ENCODE measurements at regions of chr18 and their contacts with region 1.

Region 1: DNA sequence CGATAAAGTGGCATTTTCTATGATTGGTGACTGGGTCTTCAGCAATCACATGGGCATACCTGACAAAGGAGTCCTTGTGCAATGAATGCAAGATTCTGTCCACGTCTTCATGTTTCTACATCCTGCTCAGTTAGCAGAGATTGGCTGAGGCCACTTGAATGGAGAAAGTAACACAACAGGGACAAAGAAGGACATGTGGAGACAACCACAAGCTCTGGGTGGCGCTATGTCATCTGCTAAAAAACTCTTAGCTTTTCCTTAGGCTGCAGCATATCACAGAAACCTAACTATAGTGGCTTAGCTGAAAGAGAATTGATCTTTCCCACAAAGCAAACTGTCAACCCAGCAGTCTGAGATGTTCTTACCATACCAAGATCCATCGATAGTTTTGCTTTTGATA is 1109.7 kb downstream of the SOCS6 start:
- DNase-seq: peak; percentile 15
- H3K4me3 Mint-ChIP-seq: no peak overlapping the region
- H3K27ac Mint-ChIP-seq: no peak overlapping the region
- H3K4me1 Mint-ChIP-seq: no peaks in the 10 kb centered on the region
- H3K27me3 Mint-ChIP-seq: no peaks in the 10 kb centered on the region

Region 2: DNA sequence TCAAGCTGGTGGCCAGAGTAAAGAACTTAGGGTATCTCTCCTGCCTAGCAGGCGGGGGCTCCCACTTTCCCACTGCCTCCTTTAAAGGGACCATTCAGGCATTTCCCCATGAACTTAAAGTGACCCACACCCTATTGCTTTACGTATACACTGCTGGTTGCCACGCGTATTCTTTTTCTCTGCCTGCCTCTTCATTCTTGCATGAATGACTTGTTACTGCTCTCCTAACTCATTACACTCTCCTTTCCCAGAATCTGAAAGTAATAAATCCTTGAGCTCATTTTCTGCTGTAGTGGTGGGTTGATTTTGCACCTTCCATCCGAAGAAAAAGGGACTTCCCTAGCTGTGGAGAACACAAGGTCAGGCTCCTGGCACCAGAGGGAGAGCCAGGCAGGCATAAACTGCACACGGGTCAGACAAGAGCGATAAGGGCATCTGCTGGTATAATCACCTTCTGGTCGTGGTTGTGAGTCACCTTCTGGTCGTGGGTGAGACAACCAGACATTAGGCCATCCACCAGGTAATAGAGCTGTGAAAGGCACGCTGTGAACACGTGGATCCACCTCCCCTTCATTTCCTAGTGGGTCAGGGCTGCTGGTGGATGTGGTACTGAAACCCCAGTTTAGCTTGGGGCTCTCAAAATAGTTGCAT is 159.4 kb before region 1 on chr18:
- CTCF ChIA-PET with region 1: no interaction called
- intact Hi-C with region 1: no loop called
- DNase-seq: no peak
- H3K4me3 Mint-ChIP-seq: no peak overlapping the region
- H3K27ac Mint-ChIP-seq: no peak overlapping the region
- H3K4me1 Mint-ChIP-seq: peaks cover 2% of the 10 kb centered on the region
- H3K27me3 Mint-ChIP-seq: no peaks in the 10 kb centered on the region

Region 3: DNA sequence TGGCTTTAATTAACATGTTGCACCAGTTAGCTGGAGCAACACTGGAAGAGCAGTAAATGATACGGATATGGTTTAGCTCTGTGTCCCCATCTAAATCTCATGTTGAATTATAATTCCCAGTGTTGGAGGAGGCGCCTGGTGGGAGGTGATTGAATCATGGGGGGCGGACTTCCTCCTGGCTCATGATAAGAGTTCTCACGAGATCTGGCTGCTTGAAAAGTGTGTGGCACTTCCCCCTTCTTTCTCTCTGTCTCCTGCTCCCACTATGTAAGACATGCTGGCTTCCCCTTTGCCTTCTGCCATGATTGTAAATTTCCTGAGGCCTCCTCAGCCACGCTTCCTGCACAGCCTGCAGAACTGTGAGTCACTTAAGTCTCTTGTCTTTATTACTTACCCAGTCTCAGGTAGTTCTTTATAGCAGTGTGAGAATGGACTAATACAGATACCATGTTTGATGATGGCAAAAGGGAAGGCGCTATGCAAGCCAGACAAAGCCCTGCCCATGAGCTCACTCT is 146.1 kb before region 1 on chr18:
- CTCF ChIA-PET with region 1: no interaction called
- intact Hi-C with region 1: no loop called
- DNase-seq: no peak
- H3K4me3 Mint-ChIP-seq: no peak overlapping the region
- H3K27ac Mint-ChIP-seq: no peak overlapping the region
- H3K4me1 Mint-ChIP-seq: no peaks in the 10 kb centered on the region
- H3K27me3 Mint-ChIP-seq: no peaks in the 10 kb centered on the region

Region 4: DNA sequence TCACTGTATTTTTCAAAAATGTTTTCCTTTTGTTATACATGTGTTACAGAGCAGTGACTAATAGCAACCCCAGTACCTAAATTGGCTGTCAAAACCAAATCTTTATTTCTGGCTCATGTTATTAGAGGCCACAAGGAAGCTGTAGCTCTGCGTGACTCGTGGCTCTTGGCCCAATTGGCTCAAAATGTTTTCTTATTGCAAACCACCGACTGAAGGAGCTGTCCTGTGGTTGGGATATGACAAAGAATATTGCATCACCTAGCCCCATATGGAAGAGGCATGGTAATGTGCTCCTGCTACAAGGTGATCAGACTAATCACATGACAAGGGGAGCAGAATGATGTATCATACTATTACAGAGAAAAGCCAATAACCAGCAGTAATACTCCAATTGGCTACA is 87.1 kb after region 1 on chr18:
- CTCF ChIA-PET with region 1: no interaction called
- intact Hi-C with region 1: no loop called
- DNase-seq: no peak
- H3K4me3 Mint-ChIP-seq: no peak overlapping the region
- H3K27ac Mint-ChIP-seq: no peak overlapping the region
- H3K4me1 Mint-ChIP-seq: no peaks in the 10 kb centered on the region
- H3K27me3 Mint-ChIP-seq: no peaks in the 10 kb centered on the region

Region 5: DNA sequence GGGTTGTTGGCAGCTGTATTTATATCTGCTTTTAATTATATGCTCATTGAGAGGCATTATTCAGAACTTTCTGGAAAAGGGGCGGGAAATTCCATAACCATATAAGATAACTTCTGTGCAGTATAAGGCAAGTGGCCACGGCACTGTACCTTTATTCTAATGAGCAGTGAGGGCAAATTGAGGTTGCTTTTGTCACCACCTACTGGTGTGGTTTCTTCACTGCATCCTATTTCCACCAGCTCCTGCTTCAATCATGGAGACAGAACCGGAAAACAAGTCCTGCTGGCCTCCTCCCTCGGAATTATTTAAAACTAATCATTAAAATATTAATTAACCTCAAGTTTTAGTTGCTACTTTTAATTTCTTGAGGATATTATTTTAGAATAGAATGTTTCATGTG is 386.2 kb after region 1 on chr18:
- CTCF ChIA-PET with region 1: no interaction called
- intact Hi-C with region 1: loop called (anchors 10 kb)
- DNase-seq: peak; percentile 26
- H3K4me3 Mint-ChIP-seq: no peak overlapping the region
- H3K27ac Mint-ChIP-seq: no peak overlapping the region
- H3K4me1 Mint-ChIP-seq: no peaks in the 10 kb centered on the region
- H3K27me3 Mint-ChIP-seq: no peaks in the 10 kb centered on the region

Region 6: DNA sequence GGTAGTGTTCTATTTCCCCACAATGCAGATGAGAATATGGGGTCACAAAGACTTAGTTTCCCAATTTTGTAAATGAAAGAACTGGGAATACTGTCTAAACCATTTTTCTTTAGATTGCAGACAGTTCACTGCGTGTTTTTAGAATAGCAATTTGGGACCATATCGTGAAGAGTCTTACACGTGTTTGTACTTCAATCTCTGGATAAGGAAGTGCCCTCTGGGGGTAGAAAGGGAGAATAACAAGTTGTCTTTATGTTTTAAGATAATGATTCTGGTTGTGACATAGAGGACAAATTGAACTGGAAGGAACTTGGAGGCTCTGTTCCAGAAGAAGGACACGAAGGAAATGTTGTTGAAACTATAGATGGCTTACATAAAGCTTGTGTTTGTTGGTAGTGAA is 687.9 kb after region 1 on chr18:
- CTCF ChIA-PET with region 1: no interaction called
- intact Hi-C with region 1: loop called (anchors 10 kb)
- DNase-seq: no peak
- H3K4me3 Mint-ChIP-seq: no peak overlapping the region
- H3K27ac Mint-ChIP-seq: no peak overlapping the region
- H3K4me1 Mint-ChIP-seq: peaks cover 2% of the 10 kb centered on the region
- H3K27me3 Mint-ChIP-seq: peaks cover 4% of the 10 kb centered on the region

Measured in activated naive CD4-positive, alpha-beta T cell treated with anti-CD3 and anti-CD28 coated beads for 36 hours (primary cell).